ENCODE measurements at regions of chr3 and their contacts with region 1.

Region 1: DNA sequence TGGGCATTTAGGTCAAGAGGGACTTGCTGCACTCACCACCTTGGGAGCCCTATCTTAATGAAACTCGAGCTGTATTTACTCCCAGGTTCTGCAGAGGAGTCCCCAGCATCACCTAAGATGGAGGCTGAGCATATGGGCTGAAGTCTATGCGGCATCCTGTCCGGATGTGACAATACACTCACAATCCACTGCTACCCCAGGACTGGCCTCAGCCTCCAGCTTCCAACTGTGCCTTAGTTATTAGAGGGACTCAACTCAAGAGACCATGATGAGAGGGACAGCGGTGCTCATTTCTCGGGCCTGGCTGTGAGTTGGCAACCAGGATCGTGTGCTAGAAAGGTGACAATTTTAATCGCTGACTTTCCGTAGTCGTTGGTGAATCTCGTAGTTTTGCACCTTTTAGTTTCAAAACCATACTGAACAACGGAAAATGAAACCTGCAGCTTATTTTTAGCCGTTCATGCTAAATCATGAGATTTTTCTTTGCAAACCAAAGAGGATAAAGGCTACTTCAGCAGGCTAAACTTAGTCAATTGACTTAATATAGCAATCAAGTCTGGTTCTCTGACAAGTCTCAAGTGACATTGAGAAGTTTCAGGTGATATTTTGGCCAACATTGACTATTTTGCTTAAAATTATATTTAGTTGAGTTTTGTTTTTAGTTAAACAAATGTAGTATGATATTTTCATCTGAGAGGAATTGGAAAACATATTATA is 11.1 kb downstream of the ZBTB38 start:
- DNase-seq: no peak
- ATAC-seq: peak; percentile 53
- H3K4me3 Mint-ChIP-seq: peak overlapping the region; percentile 67
- H3K27ac Mint-ChIP-seq: peak overlapping the region; percentile 90
- H3K4me1 Mint-ChIP-seq: peaks cover 70% of the 10 kb centered on the region
- H3K27me3 Mint-ChIP-seq: no peaks in the 10 kb centered on the region
- CTCF ChIP-seq: no peak

Region 2: DNA sequence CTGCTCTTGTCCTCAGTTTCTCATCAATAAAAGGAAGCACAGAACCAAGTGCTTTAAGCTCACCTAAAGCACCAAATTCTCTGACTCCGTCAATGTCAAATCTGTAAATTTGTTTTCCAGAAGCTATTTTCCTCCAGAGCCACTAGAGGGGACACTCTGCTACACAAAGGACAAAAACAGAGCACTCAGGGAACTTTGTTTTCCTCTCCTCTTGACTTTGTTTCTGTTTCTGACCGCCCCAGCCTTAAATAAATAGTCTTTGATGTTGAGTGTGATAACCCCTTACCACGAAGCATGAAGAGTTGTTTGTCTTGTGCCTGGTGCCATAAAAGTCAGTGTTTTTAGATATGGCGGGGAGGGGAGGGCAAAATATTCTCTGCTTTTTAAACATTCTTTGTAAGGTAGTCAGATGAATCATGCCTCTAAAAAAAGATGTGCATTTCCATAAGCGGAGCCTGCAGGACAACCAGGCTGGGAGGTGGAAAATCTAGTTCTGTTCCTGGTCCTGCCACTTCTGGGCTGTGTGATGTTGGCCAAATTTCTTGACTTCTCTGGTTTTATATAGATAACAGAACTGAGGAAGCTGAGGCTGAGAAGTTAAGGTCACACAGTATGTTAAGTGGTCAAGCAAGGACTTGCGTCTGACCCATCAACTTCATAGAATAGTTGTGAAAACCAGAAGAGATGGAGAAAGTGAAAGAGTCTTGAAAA is 18.4 kb before region 1 on chr3:
- CTCF ChIA-PET with region 1: no interaction called
- POLR2A ChIA-PET with region 1: interaction called, 5 read pairs
- intact Hi-C with region 1: loop called (anchors 2 kb)
- DNase-seq: no peak
- ATAC-seq: peak; percentile 49
- H3K4me3 Mint-ChIP-seq: peak overlapping the region; percentile 13
- H3K27ac Mint-ChIP-seq: no peak overlapping the region
- H3K4me1 Mint-ChIP-seq: peaks cover 7% of the 10 kb centered on the region
- H3K27me3 Mint-ChIP-seq: peaks cover 3% of the 10 kb centered on the region
- CTCF ChIP-seq: no peak

Measured in activated B cell treated with CpG ODN at 0.5 μM for 24 hours (primary cell).